Activated B cell treated with CpG ODN at 0.5 μM for 24 hours (primary cell): ENCODE measurements at regions of chr9 and their contacts with region 1.

Region 1: GRCh38 chr9:71911253-71912074 is at the start of gene C9orf85:
- DNase-seq: peak; percentile 89
- ATAC-seq: peak; percentile 91
- H3K4me3 Mint-ChIP-seq: peak within 1 kb of the TSS; percentile 100
- H3K27ac Mint-ChIP-seq: peak within 1 kb of the TSS; percentile 98
- H3K4me1 Mint-ChIP-seq: peaks cover 67% of the 10 kb centered on the region
- H3K27me3 Mint-ChIP-seq: no peaks in the 10 kb centered on the region
- CTCF ChIP-seq: no peak
- total RNA-seq, gene C9orf85: 9.5 and 9.8 TPM in 2 replicates

Region 2: GRCh38 chr9:70419546-70420266 is 1491.8 kb before region 1 on chr9:
- CTCF ChIA-PET with region 1: no interaction called
- POLR2A ChIA-PET with region 1: interaction called, 7 read pairs
- intact Hi-C with region 1: loop called (anchors 1 kb)
- DNase-seq: no peak
- ATAC-seq: peak; percentile 36
- H3K4me3 Mint-ChIP-seq: peak overlapping the region; percentile 95
- H3K27ac Mint-ChIP-seq: peak overlapping the region; percentile 98
- H3K4me1 Mint-ChIP-seq: peaks cover 39% of the 10 kb centered on the region
- H3K27me3 Mint-ChIP-seq: no peaks in the 10 kb centered on the region
- CTCF ChIP-seq: no peak

Region 3: DNA sequence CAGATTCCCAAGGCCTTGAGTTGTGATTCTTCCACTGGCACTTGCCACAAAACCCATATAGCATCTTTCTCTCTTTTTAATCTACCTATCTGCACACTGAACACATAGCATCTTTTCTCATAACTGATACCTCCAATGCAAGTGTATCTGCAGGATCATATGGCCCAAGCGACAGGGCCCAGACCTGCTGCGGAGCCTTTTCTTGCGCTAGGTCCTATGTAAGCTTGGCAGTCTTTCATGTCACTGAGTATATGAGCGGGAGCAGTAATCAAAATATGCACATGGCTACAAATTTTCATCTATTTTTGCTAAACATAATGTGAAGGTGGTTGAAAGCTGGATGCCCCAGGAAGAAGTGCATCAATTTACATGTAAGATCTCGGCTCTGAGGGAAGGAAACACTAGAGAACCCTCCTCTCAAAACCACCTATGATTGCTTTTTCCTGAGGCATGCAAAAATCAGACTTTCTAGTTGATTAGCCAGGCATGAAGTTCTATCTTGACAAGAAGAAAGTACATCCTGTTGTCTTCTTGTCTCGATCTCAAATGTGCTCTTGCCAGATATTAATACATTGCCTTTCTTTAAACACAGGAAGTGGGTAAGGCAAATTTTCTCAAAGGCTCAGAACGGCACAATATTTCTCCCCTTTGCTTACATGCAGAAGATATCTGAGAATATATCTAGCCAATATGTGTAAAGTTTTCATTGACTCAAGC is 116.2 kb before region 1 on chr9:
- CTCF ChIA-PET with region 1: no interaction called
- POLR2A ChIA-PET with region 1: interaction called, 11 read pairs
- intact Hi-C with region 1: loop called (anchors 1 kb)
- DNase-seq: no peak
- ATAC-seq: peak; percentile 84
- H3K4me3 Mint-ChIP-seq: peak overlapping the region; percentile 67
- H3K27ac Mint-ChIP-seq: peak overlapping the region; percentile 87
- H3K4me1 Mint-ChIP-seq: peaks cover 79% of the 10 kb centered on the region
- H3K27me3 Mint-ChIP-seq: no peaks in the 10 kb centered on the region
- CTCF ChIP-seq: no peak

Region 4: DNA sequence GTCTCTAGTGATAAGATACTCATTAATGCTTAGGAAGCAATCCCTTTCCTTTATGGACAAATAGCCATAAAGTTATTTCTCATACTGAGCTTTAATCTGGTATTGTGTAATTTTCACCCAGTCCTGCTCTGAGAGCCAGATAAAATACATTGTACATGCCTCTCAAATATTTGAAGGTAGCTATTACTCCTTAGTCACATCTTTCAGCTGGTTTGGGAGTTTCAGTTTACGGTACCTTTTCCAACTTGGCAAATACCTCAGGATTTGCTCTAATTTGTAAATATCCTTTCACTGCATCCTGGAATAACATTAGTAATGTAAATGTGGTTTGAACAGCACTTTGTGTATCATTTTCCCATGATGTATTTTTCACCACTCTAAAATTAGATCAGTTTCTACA is 47.8 kb before region 1 on chr9:
- CTCF ChIA-PET with region 1: no interaction called
- POLR2A ChIA-PET with region 1: interaction called, 7 read pairs
- intact Hi-C with region 1: loop called (anchors 5 kb)
- DNase-seq: no peak
- ATAC-seq: no peak
- H3K4me3 Mint-ChIP-seq: no peak overlapping the region
- H3K27ac Mint-ChIP-seq: no peak overlapping the region
- H3K4me1 Mint-ChIP-seq: peaks cover 18% of the 10 kb centered on the region
- H3K27me3 Mint-ChIP-seq: no peaks in the 10 kb centered on the region
- CTCF ChIP-seq: no peak

Region 5: GRCh38 chr9:72154468-72155281 is 243.2 kb after region 1 on chr9:
- CTCF ChIA-PET with region 1: no interaction called
- POLR2A ChIA-PET with region 1: no interaction called
- intact Hi-C with region 1: loop called (anchors 1 kb)
- DNase-seq: no peak
- ATAC-seq: peak; percentile 85
- H3K4me3 Mint-ChIP-seq: peak overlapping the region; percentile 12
- H3K27ac Mint-ChIP-seq: peak overlapping the region; percentile 83
- H3K4me1 Mint-ChIP-seq: peaks cover 21% of the 10 kb centered on the region
- H3K27me3 Mint-ChIP-seq: peaks cover 13% of the 10 kb centered on the region
- CTCF ChIP-seq: no peak